ENCODE measurements at regions of chr10 and their contacts with region 1.

Region 1: GRCh38 chr10:17617031-17617911 is at the start of gene HACD1:
- DNase-seq: peak; percentile 73
- H3K4me3 ChIP-seq: peak within 1 kb of the TSS; percentile 80 to 94 (median 82)
- H3K27ac ChIP-seq: peak within 1 kb of the TSS; percentile 84 to 93 (median 91)
- H3K4me1 ChIP-seq: peaks cover 0 to 8% (median 6%) of the 10 kb centered on the region in 4 donors
- H3K27me3 ChIP-seq: peaks cover 22% of the 10 kb centered on the region
- CTCF ChIP-seq: peak in 2 of 5 experiments; percentile 12 to 13
- EP300 ChIP-seq: no peak
- POLR2A ChIP-seq: peak; percentile 35
- total RNA-seq, gene HACD1: 6.7 to 52.3 (median 16.5) TPM in 3 of 4 donors, not detected in the other

Region 2: DNA sequence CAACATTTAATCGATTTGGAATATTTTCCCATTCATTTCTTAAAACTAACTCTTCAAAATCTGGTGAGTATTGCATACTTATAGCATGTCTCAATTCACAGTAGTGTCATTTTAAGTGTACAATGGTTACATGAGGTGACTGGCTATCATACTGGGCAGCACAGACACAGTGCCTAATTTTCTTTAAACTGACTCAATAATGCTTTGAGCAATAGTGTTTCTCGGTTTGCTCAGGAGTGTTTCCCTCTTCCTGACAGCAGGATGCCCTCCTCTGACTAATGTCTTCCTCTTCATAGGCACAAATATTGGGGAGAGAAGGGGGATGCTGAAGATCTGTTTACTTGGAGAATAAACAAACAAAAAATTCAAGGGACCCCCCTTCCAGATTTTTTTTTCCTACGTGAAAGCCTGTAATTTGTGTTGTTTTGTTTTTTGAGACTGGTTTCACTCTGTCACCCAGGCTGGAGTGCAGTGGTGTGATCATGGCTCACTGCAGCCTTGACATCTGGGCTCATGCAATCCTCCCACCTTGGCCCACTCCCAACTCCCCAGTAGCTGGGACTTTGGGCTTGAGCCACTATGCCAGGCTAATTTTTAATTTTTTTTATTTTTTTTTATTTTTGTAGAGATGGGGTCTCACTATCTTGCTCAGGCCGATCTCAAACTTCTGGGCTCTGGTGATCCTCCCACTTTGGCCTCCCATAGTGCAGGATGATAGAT is 194.0 kb after region 1 on chr10:
- in situ Hi-C with region 1: no loop called
- intact Hi-C with region 1: no loop called
- DNase-seq: no peak
- H3K4me3 ChIP-seq: peak overlapping the region in 2 of 4 donors; percentile 5 to 16
- H3K27ac ChIP-seq: no peak overlapping the region
- H3K4me1 ChIP-seq: no peaks in the 10 kb centered on the region
- H3K27me3 ChIP-seq: no peaks in the 10 kb centered on the region
- CTCF ChIP-seq: no peak
- EP300 ChIP-seq: no peak
- POLR2A ChIP-seq: no peak

Region 3: DNA sequence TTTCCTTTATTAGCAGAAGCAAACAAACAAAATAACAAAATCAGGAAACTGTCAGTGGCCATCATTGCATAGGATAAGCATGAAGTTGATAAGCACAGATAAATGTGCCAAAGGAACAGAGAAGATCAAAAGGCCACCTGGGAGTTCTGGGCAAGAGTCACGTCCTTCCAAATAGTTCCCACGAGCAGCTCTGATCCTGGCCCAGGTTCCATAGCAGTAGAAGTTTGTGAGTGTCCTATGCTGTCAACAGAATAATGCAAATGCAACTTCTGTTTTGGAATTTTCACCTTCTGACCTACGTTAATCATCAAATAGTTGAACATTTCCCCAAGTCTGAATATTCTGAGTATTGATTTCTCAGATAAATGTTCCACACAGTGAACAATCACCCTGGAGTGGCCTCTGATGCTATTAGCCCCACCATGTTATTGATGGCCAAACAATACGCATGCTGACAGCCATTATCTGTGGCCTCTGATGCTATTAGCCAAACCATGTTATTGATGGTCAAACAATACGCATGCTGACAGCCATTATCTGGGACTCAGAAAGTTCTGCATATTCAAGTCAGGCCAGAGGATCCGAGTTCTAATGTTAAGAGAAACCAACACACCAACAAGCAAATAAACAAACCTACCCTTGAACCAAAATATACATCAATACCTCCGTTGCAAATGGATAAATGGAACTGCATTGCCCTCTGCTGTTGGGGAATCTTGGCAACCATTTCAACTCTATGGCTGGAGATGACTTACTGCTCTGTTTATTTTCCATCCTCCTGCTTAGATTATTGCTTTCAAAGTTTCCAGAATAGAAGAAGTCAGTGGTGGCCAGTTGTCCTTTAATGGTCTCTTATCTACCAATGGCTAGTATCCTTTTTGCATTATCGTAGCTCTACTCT is 255.2 kb after region 1 on chr10:
- in situ Hi-C with region 1: loop called in 2 of 4 experiments (anchors 25 kb)
- intact Hi-C with region 1: no loop called
- DNase-seq: peak; percentile 16
- H3K4me3 ChIP-seq: no peak overlapping the region
- H3K27ac ChIP-seq: no peak overlapping the region
- H3K4me1 ChIP-seq: peaks cover 0 to 10% (median 0%) of the 10 kb centered on the region in 4 donors
- H3K27me3 ChIP-seq: no peaks in the 10 kb centered on the region
- CTCF ChIP-seq: peak; percentile 22 to 52 (median 39)
- EP300 ChIP-seq: no peak
- POLR2A ChIP-seq: no peak

Region 4: GRCh38 chr10:18087355-18087754 is 470.1 kb after region 1 on chr10:
- in situ Hi-C with region 1: loop called in 1 of 4 experiments (anchors 25 kb)
- intact Hi-C with region 1: no loop called
- DNase-seq: peak; percentile 24
- H3K4me3 ChIP-seq: no peak overlapping the region
- H3K27ac ChIP-seq: peak overlapping the region in 3 of 4 donors; percentile 51 to 72 (median 52)
- H3K4me1 ChIP-seq: peaks cover 0 to 17% (median 3%) of the 10 kb centered on the region in 4 donors
- H3K27me3 ChIP-seq: no peaks in the 10 kb centered on the region
- CTCF ChIP-seq: no peak
- EP300 ChIP-seq: no peak
- POLR2A ChIP-seq: no peak

Region 5: DNA sequence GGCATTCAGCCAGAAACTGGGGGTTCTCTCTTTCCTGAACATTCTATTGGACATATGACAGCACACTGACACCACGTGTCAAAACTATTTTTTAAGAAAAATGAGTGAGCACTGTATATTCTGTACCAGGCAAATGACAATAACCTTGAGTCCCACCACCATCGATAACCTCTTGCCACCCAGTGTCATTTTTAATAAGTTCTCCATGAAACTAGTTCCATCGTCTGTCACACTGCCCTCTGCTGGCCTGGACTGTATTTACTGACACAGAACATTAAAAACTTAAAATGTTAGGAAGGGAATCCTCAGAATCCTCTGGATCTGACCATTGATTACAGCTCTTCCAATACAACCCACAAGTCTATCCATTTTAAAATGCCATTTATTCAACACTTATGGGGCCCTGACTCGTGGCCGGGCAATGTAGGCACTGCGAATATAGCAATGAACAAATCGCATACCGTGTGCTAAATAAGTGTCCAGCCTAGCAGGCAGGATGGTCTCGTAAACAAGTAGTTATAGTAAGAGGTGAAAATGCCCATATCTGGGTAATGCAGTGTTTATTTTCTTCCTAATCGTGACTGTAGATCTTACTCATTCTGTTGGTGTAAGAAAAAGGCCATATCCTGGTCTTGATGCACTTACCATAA is 487.1 kb after region 1 on chr10:
- in situ Hi-C with region 1: loop called in 3 of 4 experiments (anchors 25 kb)
- intact Hi-C with region 1: no loop called
- DNase-seq: peak; percentile 56
- H3K4me3 ChIP-seq: no peak overlapping the region
- H3K27ac ChIP-seq: no peak overlapping the region
- H3K4me1 ChIP-seq: no peaks in the 10 kb centered on the region
- H3K27me3 ChIP-seq: no peaks in the 10 kb centered on the region
- CTCF ChIP-seq: peak; percentile 55 to 73 (median 64)
- EP300 ChIP-seq: no peak
- POLR2A ChIP-seq: no peak

Measured in transverse colon (tissue), 4 donors.